GM10248 (cell line): ENCODE measurements at regions of chr10 and their contacts with region 1.

Region 1: DNA sequence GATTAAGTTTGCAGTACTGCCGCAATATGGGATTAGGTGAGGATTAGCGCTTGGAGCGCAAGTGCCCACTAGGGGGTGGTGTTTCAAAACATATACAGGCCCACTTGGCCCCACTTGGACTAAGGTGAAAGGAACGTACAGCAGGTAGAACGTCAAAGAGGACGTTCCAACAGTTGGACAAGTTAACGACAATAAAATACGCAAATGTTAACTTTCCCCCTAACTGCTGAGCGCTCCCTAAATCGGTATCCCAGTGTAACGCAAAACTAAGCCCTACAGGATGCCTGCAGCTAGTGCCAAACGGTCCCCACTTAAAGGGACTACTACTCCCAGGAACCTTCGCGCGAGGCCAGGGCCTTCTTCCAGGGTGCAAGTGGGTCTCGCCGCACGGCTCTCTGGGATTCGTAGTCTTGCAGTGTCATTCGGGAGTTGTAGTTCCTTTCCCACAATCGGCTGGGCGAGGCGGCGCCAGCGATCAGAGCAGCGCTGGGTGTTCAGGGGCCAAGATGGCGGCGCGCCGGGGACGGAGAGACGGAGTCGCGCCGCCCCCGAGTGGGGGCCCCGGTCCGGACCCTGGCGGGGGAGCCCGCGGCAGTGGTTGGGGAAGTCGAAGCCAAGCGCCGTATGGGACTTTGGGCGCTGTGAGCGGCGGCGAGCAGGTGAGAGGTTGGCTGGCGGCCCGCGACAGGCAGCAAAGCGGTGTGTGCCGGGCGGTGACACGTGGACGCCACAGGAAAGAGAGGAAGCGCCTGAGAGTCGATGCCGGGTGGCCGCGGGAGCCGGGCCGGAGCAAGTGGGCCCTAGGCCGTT is at the start of gene PPRC1:
- DNase-seq: peak; percentile 97
- CTCF ChIP-seq: peak; percentile 84

Region 2: GRCh38 chr10:102114861-102115618 is 17.7 kb before region 1 on chr10:
- CTCF ChIA-PET with region 1: interaction called, 21 read pairs
- POLR2A ChIA-PET with region 1: no interaction called
- DNase-seq: peak; percentile 90
- CTCF ChIP-seq: no peak

Region 3: GRCh38 chr10:102120142-102120990 is 12.4 kb before region 1 on chr10 and contains the start of gene LDB1:
- CTCF ChIA-PET with region 1: interaction called, 33 read pairs
- POLR2A ChIA-PET with region 1: no interaction called
- DNase-seq: peak; percentile 87
- CTCF ChIP-seq: no peak

Region 4: GRCh38 chr10:102151774-102152544 is 19.2 kb after region 1 on chr10 and contains the start of gene NOLC1:
- CTCF ChIA-PET with region 1: interaction called, 17 read pairs
- POLR2A ChIA-PET with region 1: interaction called, 24 read pairs
- DNase-seq: peak; percentile 98
- CTCF ChIP-seq: no peak

Region 5: DNA sequence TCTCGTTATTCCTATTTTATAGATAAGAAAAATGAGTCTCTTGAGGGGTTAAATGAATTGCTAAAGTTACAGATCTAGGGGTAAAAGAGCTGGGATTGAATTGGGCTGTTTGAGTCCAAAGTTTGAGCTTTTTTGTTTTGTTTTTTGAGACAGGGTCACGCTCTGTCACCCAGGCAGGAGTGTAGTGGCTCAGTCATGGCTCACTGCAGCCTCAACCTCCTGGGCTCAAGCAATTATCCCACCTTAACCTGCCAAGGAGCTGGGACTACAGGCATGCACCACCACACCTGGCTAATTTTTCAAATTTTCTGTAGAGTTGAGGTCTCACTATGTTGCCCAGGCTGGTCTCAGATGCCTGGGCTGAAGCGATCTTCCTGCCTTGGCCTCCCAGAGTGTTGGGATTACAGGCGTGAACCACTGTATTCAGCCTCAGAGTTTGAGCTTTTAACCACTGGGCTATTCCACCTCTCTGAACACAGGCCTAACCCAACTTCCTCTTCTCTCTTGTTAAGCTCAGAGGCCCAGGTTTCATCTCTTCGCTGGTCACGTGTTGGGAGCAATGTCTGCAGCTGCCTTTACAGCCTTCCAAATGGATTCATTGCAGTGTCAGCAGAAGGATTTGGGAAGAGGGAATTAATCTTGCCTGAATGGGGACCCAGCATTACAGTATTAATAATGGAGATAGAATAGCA is 379.0 kb after region 1 on chr10:
- CTCF ChIA-PET with region 1: no interaction called
- POLR2A ChIA-PET with region 1: no interaction called
- DNase-seq: peak; percentile 66
- CTCF ChIP-seq: no peak